Dorsolateral prefrontal cortex (tissue), 120 donors: ENCODE measurements at regions of chr11 and their contacts with region 1.

Region 1: GRCh38 chr11:75328426-75329277 is 22.8 kb downstream of the ARRB1 start:
- DNase-seq: peak; percentile 65 to 89 (median 83)
- H3K4me3 ChIP-seq: peak overlapping the region in 1 of 59 donors; percentile 6
- H3K27ac ChIP-seq: peak overlapping the region; percentile 14 to 97 (median 74)
- H3K27me3 ChIP-seq: no peaks in the 10 kb centered on the region
- CTCF ChIP-seq: peak in 55 of 56 donors; percentile 49 to 91 (median 73)

Region 2: GRCh38 chr11:75191330-75191717 is 137.3 kb before region 1 on chr11:
- intact Hi-C with region 1: no loop called
- DNase-seq: no peak
- H3K4me3 ChIP-seq: no peak overlapping the region
- H3K27ac ChIP-seq: peak overlapping the region in 5 of 59 donors; percentile 6 to 36 (median 9)
- H3K27me3 ChIP-seq: no peaks in the 10 kb centered on the region
- CTCF ChIP-seq: no peak

Region 3: GRCh38 chr11:75301601-75302345 is 26.9 kb before region 1 on chr11:
- intact Hi-C with region 1: no loop called
- DNase-seq: peak in 1 of 10 donors; percentile 81
- H3K4me3 ChIP-seq: peak overlapping the region in 1 of 59 donors; percentile 48
- H3K27ac ChIP-seq: peak overlapping the region; percentile 60 to 100 (median 94)
- H3K27me3 ChIP-seq: no peaks in the 10 kb centered on the region
- CTCF ChIP-seq: no peak

Region 4: DNA sequence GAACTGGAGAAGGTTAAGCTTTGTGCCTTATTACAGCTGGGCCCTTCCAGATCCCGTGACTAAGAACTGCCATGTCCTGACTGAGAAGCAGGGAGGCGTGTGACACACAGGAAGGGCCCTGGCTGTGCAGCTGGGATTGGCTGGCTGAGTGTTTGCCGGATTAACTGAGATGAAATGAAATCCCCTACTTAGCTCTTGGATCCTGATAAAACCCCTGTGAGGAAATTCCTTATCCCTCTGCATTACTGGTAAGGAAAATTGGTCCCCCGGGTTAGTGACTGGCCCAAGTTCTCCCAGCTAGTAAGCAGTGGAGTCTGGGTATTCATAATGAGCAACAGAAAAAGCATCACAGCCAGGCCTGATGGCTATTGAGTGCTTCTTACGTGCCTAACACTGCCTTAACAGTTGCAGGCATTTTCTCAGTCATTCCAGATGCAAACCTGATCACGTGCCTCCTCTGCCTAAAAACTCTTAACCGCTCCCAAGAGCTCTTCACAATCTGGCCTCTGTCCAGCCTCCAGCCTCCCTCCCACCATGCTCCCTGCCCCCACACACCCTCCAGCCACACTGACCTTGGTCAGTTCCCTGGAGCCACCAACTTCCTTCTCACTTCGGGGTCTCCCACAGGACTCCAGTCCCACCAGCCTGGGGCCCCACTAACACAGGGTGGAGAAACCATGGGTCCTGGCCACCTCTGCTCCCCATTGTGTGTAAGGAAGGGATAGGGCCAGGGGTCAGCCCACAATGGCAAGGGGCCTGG is 15.0 kb before region 1 on chr11:
- intact Hi-C with region 1: loop called in 1 of 2 experiments (anchors 2 kb)
- DNase-seq: peak in 3 of 10 donors; percentile 53 to 61 (median 58)
- H3K4me3 ChIP-seq: no peak overlapping the region
- H3K27ac ChIP-seq: peak overlapping the region; percentile 31 to 100 (median 95)
- H3K27me3 ChIP-seq: no peaks in the 10 kb centered on the region
- CTCF ChIP-seq: no peak

Region 5: DNA sequence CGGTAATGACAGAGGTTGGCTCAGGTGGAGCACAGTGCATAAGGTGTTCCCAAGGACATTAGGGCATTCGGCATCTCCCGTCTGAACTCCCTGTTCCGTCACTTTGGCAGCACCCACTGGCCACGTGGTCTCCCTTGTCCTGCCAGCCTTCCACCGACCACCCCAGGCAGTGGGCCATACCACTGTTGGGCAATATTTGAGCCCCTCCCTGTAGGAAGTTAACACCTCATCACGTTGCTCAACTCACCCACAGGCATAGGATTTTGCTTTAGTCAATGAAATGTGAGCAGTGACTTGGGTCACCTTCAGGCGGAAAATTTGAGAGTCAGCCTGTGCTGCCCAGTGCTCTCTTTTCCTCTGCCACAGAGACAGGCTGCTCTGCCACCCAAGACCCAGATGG is 277.4 kb after region 1 on chr11:
- intact Hi-C with region 1: no loop called
- DNase-seq: no peak
- H3K4me3 ChIP-seq: no peak overlapping the region
- H3K27ac ChIP-seq: no peak overlapping the region
- H3K27me3 ChIP-seq: no peaks in the 10 kb centered on the region
- CTCF ChIP-seq: no peak